H1 (cell line): ENCODE measurements at regions of chr9 and their contacts with region 1.

Region 1: DNA sequence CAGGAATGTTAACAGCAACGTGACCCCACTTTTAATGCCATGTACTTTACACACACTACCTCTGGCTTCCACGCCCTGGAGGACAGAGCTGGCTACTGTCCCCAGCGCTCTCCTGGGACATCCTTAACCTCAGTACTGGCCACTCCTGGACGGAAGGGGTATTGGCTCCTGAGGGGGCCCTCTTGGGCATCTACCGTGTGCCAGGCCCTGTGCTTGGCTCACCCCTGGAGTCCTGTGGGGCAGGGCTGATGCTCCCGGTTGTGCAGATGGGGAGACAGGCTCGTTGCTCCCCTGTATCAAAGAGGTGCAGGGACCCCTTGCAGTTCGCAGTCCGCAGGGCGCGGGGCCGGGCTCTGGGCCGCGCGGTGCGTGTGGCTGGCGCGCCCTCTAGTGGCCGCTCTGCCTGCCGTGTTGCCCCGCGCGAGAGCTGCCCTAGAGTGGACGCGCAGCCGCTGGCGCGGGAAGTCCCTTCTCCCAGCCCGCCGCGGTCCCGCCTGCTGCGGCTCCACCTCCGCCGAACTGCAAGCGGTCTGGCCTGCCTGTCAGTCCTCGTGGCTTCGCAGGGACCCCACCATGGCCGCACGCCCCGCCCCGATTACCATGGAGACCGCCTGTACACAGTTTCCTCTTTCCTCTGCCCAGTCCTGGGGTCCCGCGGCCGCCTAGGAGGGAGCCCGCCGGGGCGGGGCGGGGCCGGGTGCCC is at the start of gene WDR38:
- DNase-seq: peak in 1 of 2 experiments; percentile 92
- H3K4me3 ChIP-seq: peak within 1 kb of the TSS; percentile 25 to 61 (median 48)
- H3K27ac ChIP-seq: no peak within 1 kb of the TSS
- H3K4me1 ChIP-seq: 0 out of 7 replicates have a peak, but pooled peaks cover 0 to 3% (median under 1%) of the 10 kb centered on the region in 4 experiments
- H3K27me3 ChIP-seq: no peaks in the 10 kb centered on the region
- CTCF ChIP-seq: peak in 2 of 3 experiments; percentile 73 to 91; a peak in 3 of 4 replicates
- EP300 ChIP-seq: no peak
- POLR2A ChIP-seq: no peak
- RAD21 ChIP-seq: peak; percentile 74 to 77
- total RNA-seq, gene WDR38: not detected in 2 replicates

Region 2: DNA sequence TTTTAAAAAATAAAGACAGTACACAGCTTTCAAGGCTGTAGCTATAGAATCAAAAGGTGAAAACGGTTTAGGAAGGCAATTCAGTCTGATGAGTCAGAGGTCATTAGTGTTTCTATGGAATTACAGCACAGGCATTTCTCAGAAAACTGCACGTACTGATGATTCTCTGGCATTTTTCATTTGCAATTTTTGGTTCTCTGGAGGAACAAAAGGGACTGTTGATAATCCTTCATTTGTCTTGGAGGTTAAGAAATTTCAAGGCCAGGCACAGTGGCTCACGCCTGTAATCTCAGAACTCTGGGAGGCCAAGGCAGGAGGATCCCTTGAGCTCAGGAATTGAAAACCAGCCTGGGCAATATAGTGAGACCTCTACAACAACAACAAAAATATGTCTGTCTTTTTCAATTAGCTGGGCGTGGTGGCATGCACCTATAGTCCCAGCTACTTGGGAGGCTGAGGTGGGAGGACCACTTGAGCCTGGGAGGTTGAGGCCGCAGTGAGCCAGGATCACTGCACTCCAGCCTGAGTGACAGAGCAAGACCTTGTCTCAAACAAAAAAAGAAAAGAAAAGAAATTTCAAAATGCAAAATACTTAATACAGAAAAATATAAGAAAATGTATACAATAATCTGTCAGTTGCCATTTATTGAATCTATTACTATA is 109.2 kb before region 1 on chr9:
- CTCF ChIA-PET with region 1: interaction called, 11 read pairs
- POLR2A ChIA-PET with region 1: no interaction called
- DNase-seq: no peak
- H3K4me3 ChIP-seq: no peak overlapping the region
- H3K27ac ChIP-seq: no peak overlapping the region
- H3K4me1 ChIP-seq: peaks cover 0 to 5% (median 0%) of the 10 kb centered on the region in 4 experiments; a peak in 2 of 7 replicates
- H3K27me3 ChIP-seq: no peaks in the 10 kb centered on the region
- CTCF ChIP-seq: no peak
- EP300 ChIP-seq: no peak
- POLR2A ChIP-seq: no peak
- RAD21 ChIP-seq: no peak

Region 3: DNA sequence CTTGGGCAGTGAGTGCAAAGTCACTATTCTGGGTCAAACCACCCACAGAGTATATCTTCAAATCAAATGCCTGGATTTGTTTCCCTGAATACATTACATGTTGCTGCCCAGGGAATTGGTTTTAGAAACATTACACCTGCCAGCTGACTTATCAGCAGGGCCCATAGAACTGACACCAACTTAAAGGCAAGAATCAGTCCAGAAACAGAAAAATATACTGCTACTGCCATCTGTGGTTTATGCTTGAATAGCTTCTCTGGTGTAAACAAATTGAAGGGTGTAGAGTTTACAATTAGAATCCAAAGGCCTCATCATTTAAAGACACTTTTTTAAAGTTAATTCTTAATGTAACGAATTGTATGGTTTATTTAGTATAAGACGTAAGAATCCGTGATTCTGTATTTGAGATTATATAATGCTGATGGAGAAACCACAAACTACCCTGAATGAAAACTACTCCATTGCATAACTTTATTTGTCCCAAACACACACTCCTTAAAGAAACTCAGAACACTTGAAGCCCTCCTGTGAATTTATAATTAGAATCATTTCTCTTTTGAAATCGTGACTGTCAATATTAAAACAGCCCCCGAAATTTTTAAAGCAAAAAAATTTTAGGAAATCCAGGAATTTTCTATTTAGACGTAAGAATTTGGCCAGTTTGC is 88.1 kb before region 1 on chr9:
- CTCF ChIA-PET with region 1: interaction called, 1,300 read pairs
- POLR2A ChIA-PET with region 1: interaction called, 396 read pairs
- DNase-seq: no peak
- H3K4me3 ChIP-seq: peak overlapping the region in 1 of 4 experiments; percentile 86; a peak in 2 of 8 replicates
- H3K27ac ChIP-seq: no peak overlapping the region
- H3K4me1 ChIP-seq: peaks cover 4 to 40% (median 20%) of the 10 kb centered on the region in 4 experiments; a peak in 6 of 7 replicates
- H3K27me3 ChIP-seq: no peaks in the 10 kb centered on the region
- CTCF ChIP-seq: peak in 2 of 3 experiments; percentile 23 to 44; a peak in 2 of 4 replicates
- EP300 ChIP-seq: no peak
- POLR2A ChIP-seq: no peak
- RAD21 ChIP-seq: peak; percentile 40 to 51

Region 4: GRCh38 chr9:124868511-124869465 is 15.8 kb after region 1 on chr9:
- CTCF ChIA-PET with region 1: interaction called, 1,529 read pairs
- POLR2A ChIA-PET with region 1: interaction called, 573 read pairs
- DNase-seq: peak in 1 of 2 experiments; percentile 89
- H3K4me3 ChIP-seq: peak overlapping the region; percentile 86 to 95 (median 95)
- H3K27ac ChIP-seq: peak overlapping the region; percentile 84
- H3K4me1 ChIP-seq: peaks cover 4 to 20% (median 13%) of the 10 kb centered on the region in 4 experiments
- H3K27me3 ChIP-seq: no peaks in the 10 kb centered on the region
- CTCF ChIP-seq: peak in 2 of 3 experiments; percentile 58 to 62; a peak in 2 of 4 replicates
- EP300 ChIP-seq: peak in 1 of 2 experiments; percentile 45; a peak in 1 of 3 replicates
- POLR2A ChIP-seq: peak; percentile 63 to 76
- RAD21 ChIP-seq: no peak; a peak in 1 of 4 replicates

Region 5: DNA sequence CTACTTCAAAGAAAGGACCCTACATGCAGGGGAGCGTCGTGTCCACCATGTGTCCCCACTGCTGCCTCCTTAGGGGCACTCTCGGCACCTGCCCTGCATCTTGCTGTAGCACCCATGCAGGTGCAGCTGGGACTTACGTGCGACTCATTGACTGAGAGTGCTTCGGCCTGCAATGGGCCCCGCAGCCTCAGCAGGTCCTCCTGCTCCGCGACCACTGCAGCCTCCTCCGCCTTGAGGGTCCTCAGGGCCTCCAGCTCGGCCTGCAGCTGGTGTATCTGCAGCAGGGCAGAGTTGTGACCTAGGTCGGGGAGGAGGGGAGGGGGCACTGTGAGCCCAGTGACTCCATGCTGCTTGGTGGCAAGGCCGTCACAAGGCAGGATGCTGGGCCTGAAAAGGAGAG is 36.0 kb after region 1 on chr9:
- CTCF ChIA-PET with region 1: interaction called, 29 read pairs
- POLR2A ChIA-PET with region 1: interaction called, 573 read pairs
- DNase-seq: no peak
- H3K4me3 ChIP-seq: no peak overlapping the region
- H3K27ac ChIP-seq: no peak overlapping the region
- H3K4me1 ChIP-seq: peaks cover 0 to 2% (median under 1%) of the 10 kb centered on the region in 4 experiments; a peak in 3 of 7 replicates
- H3K27me3 ChIP-seq: no peaks in the 10 kb centered on the region
- CTCF ChIP-seq: no peak
- EP300 ChIP-seq: no peak
- POLR2A ChIP-seq: no peak
- RAD21 ChIP-seq: no peak

Region 6: GRCh38 chr9:124899845-124900244 is 46.9 kb after region 1 on chr9:
- CTCF ChIA-PET with region 1: interaction called, 29 read pairs
- POLR2A ChIA-PET with region 1: interaction called, 573 read pairs
- DNase-seq: no peak
- H3K4me3 ChIP-seq: no peak overlapping the region
- H3K27ac ChIP-seq: no peak overlapping the region
- H3K4me1 ChIP-seq: 0 out of 7 replicates have a peak, but pooled peaks cover 0 to 2% (median 0%) of the 10 kb centered on the region in 4 experiments
- H3K27me3 ChIP-seq: no peaks in the 10 kb centered on the region
- CTCF ChIP-seq: no peak
- EP300 ChIP-seq: no peak
- POLR2A ChIP-seq: no peak
- RAD21 ChIP-seq: no peak